ENCODE measurements at regions of chr10 and their contacts with region 1.

Region 1: DNA sequence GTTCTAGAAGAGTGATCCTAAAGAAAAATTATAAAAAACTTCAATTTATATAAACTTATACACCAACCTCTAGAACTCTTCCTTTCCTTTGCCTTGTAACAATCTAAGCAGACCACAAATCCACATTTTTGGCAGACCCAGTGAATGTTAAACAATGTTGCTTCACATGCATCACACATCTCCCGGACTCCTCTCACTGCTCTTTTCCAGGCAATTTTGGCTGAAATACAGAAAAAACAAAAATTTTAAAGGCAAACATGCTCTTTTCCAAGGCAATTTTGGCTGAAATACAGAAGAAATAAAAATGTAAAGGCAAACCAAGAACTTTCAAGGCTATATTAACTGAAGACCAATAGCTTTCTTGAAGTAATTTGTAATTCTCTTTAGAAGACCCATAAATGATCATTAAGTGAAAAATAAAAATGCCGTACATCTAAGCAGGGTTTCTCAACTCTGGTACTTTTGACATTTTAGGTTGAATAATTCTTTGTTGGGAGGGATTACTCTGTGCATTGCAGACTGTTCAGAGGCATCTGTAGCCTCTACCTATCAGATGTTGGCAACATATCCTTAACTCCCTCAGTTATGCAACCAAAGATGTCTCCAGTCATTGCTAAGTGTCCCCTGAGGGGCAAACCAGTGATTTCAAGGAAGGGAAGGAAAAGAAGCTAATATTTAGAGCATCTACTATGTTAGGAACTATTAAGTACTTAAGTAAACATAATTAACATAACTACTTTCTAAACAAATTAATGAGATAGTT is 64.4 kb downstream of the NRBF2 start:
- DNase-seq: no peak
- H3K4me3 ChIP-seq: no peak overlapping the region
- H3K27ac ChIP-seq: no peak overlapping the region
- H3K4me1 ChIP-seq: no peaks in the 10 kb centered on the region
- H3K27me3 ChIP-seq: no peaks in the 10 kb centered on the region
- CTCF ChIP-seq: no peak

Region 2: GRCh38 chr10:63173468-63174232 is 23.9 kb before region 1 on chr10:
- CTCF ChIA-PET with region 1: no interaction called
- dilution Hi-C with region 1: no loop called
- in situ Hi-C with region 1: no loop called
- intact Hi-C with region 1: loop called (anchors 2 kb)
- DNase-seq: no peak
- H3K4me3 ChIP-seq: no peak overlapping the region
- H3K27ac ChIP-seq: no peak overlapping the region
- H3K4me1 ChIP-seq: no peaks in the 10 kb centered on the region
- H3K27me3 ChIP-seq: no peaks in the 10 kb centered on the region
- CTCF ChIP-seq: no peak

Measured in mammary epithelial cell (primary cell).